Left ventricle myocardium inferior (tissue), 1 donor: ENCODE measurements at regions of chr5 and their contacts with region 1.

Region 1: DNA sequence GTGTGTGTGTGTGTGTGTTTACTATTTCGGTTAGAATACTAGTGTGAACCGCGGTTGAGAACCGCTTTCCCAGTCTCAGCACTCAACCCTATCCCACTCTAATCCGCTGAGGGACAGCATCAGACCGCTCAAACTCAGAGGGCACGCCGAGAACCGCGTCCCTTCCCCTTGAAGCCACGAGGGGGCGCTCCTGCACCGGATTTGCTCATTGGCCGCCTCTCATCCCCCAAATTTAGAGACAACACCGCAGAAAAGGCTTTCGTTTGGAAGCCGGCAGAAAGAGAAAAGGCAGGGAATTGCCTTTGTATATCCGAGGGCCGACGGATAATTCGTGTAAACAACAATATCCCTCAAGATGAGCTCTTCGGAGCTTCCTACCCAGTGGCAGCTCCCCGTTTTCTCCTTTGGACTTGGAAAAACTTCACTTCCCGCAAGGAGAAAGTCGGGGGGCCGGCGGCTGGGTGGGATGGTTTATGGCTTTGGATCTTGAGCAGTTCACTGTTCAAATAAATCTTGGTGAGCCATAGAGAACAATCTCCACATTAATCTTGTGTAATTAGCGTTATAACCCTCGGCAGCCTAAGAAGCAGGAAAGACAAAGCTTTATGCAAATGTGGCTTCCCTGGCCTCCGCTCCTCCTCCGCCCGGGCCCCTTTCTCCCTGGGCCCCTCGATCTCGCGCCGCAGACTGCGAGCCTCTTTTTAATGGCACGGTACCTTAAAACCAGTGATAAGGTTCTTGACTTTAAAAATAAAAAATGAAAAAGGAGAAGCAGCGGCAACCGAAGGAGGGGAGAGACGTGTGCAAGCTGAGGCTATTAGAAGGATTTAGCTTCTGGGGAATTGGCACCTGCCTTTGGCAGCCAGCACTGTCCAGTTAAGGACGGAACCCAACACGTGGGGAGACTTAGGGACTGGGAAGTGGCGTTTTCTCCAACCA is 296.8 kb downstream of the PARP8 start:
- DNase-seq: peak; percentile 62
- H3K4me3 ChIP-seq: peak overlapping the region; percentile 62
- H3K27ac ChIP-seq: no peak overlapping the region
- H3K4me1 ChIP-seq: peaks cover 38% of the 10 kb centered on the region
- H3K27me3 ChIP-seq: peaks cover 92% of the 10 kb centered on the region
- CTCF ChIP-seq: peak; percentile 82

Region 2: GRCh38 chr5:52007230-52007858 is 1044.1 kb after region 1 on chr5:
- intact Hi-C with region 1: loop called (anchors 5 kb)
- DNase-seq: no peak
- H3K4me3 ChIP-seq: no peak overlapping the region
- H3K27ac ChIP-seq: no peak overlapping the region
- H3K4me1 ChIP-seq: no peaks in the 10 kb centered on the region
- H3K27me3 ChIP-seq: no peaks in the 10 kb centered on the region
- CTCF ChIP-seq: peak; percentile 63

Region 3: DNA sequence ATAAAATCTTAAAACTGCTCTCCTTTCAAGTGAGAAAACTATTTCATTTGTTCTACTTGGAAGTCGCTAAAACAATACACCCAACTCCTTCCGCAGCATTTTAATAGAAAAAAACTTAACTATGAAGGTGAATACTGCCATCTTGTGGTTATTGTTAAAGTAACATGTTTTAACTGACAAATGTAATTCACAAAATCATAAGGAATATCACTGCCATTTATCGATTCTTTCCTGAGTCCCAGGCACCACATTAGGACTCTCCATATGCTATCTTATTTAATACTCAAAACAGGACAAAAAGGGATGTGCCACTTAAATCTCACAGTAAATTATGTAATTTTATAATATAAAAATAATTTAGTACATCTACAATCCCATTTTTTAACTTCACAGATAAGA is 1694.0 kb after region 1 on chr5:
- intact Hi-C with region 1: loop called (anchors 10 kb)
- DNase-seq: no peak
- H3K4me3 ChIP-seq: no peak overlapping the region
- H3K27ac ChIP-seq: no peak overlapping the region
- H3K4me1 ChIP-seq: peaks cover 6% of the 10 kb centered on the region
- H3K27me3 ChIP-seq: peaks cover 14% of the 10 kb centered on the region
- CTCF ChIP-seq: peak; percentile 73